ENCODE measurements at regions of chr21 and their contacts with region 1.

Region 1: DNA sequence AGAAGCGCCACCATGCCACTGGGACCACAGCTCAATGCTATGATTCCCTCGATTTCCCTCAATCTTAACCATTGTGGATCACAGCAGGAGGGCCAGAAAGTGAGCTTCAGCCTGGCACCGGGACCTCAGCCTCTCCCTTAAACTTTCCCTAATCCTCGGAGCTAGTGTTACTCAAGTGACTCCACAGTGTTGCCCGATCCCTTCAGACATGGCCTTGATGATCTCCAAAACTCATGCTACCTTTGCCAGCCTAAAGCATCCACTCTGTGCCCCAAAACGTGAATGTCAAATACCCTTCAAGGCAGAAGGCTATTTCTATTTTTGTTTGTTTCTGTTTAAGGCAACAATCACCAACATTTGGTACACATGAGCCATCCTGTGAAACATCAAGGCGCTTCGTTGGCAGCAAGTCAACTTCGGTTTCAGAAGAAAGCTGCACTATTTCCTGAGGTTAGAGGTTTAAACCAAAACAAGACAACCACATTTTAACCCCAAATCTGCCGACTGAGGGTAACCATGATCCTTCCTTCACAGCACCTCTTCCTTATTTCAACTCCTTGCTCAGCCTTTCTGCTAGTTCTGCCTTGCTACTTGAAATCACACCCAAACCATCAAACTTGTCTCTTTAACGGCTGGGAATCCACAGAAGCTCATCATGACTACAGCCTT is 94.4 kb upstream of the KRTAP19-8 start:
- DNase-seq: peak; percentile 84
- ATAC-seq: peak; percentile 75
- H3K4me3 Mint-ChIP-seq: peak overlapping the region; percentile 43
- H3K27ac Mint-ChIP-seq: peak overlapping the region; percentile 92
- H3K4me1 Mint-ChIP-seq: peaks cover 60% of the 10 kb centered on the region
- H3K27me3 Mint-ChIP-seq: no peaks in the 10 kb centered on the region

Region 2: GRCh38 chr21:30996728-30997127 is 136.0 kb before region 1 on chr21:
- CTCF ChIA-PET with region 1: no interaction called
- POLR2A ChIA-PET with region 1: no interaction called
- intact Hi-C with region 1: no loop called
- DNase-seq: no peak
- ATAC-seq: no peak
- H3K4me3 Mint-ChIP-seq: no peak overlapping the region
- H3K27ac Mint-ChIP-seq: no peak overlapping the region
- H3K4me1 Mint-ChIP-seq: no peaks in the 10 kb centered on the region
- H3K27me3 Mint-ChIP-seq: peaks cover 18% of the 10 kb centered on the region

Region 3: DNA sequence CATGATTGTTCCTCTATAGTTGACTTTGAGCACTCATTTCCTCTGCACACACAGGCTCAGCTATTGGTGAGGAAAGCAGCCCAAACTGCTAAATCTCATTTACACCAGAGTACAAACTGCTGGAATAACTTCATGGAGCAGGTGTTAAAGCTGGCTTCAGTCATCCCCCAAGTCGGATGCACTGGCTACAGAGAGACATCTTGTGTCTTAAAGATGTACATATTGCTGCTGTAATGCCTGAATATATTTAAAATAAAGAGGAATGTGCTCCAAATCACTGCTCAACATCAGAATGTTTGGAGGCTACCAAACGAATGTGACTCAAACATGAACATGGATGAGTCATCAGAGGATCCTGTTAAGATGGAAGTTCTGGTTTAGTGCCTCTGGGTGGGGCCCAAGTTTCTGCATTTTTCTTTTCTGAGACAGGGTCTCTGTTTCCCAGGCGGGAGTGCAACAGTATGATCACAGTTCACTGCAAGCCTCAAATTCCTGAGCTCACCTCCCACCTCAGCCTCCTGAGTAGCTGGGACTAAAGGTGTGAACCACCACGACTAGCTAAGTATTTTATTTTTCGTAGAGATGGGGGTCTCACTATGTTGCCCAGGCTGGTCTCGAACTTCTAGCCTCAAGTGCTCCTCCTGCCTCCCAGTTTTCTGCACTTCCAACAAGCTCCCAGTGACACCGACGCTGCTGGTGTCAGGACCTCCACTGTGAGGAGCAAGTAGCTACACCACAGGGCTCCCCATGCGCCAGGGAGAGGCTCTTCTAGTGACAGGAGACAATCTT is 15.4 kb before region 1 on chr21:
- CTCF ChIA-PET with region 1: interaction called, 10 read pairs
- POLR2A ChIA-PET with region 1: no interaction called
- intact Hi-C with region 1: no loop called
- DNase-seq: peak; percentile 32
- ATAC-seq: peak; percentile 83
- H3K4me3 Mint-ChIP-seq: no peak overlapping the region
- H3K27ac Mint-ChIP-seq: peak overlapping the region; percentile 30
- H3K4me1 Mint-ChIP-seq: peaks cover 15% of the 10 kb centered on the region
- H3K27me3 Mint-ChIP-seq: no peaks in the 10 kb centered on the region

Region 4: GRCh38 chr21:31161157-31161556 is 28.4 kb after region 1 on chr21:
- CTCF ChIA-PET with region 1: interaction called, 4 read pairs
- POLR2A ChIA-PET with region 1: interaction called, 3 read pairs
- intact Hi-C with region 1: loop called (anchors 1 to 2 kb)
- DNase-seq: peak; percentile 53
- ATAC-seq: peak; percentile 65
- H3K4me3 Mint-ChIP-seq: no peak overlapping the region
- H3K27ac Mint-ChIP-seq: peak overlapping the region; percentile 79
- H3K4me1 Mint-ChIP-seq: peaks cover 87% of the 10 kb centered on the region
- H3K27me3 Mint-ChIP-seq: no peaks in the 10 kb centered on the region

Region 5: DNA sequence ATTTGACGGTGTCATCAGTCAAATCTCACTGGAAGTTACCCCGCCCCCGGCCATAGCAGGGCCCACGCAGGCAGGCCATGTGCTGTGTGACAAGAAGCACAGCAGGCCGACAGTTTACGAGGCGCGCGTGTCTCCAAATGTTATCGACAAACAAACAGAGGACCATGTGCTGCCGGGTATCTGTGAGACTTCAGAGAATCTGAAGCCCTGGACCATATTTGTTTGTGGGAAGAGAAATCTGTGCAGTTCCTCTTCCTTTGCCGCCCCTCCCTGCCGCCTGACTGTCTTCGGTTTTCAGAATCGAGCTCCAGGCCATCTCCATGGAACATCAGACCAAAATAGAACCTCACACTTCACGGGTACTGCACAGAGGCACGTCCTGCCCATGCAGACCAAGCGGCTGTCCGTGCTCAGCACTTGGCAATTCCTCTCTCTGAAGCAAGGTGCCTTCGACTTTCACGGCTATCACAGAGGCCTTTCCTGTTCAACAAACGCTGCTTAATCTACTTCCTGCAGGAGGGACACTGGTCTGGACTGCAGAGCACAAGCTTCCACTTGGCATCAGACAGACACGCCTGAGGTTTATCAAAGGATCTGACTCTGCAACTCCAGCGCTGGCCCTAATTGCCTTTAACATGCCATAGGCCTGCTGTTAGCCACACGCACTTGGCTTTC is 41.3 kb after region 1 on chr21:
- CTCF ChIA-PET with region 1: interaction called, 3 read pairs
- POLR2A ChIA-PET with region 1: no interaction called
- intact Hi-C with region 1: loop called (anchors 1 to 2 kb)
- DNase-seq: peak; percentile 83
- ATAC-seq: peak; percentile 56
- H3K4me3 Mint-ChIP-seq: peak overlapping the region; percentile 59
- H3K27ac Mint-ChIP-seq: peak overlapping the region; percentile 89
- H3K4me1 Mint-ChIP-seq: peaks cover 89% of the 10 kb centered on the region
- H3K27me3 Mint-ChIP-seq: no peaks in the 10 kb centered on the region

Region 6: DNA sequence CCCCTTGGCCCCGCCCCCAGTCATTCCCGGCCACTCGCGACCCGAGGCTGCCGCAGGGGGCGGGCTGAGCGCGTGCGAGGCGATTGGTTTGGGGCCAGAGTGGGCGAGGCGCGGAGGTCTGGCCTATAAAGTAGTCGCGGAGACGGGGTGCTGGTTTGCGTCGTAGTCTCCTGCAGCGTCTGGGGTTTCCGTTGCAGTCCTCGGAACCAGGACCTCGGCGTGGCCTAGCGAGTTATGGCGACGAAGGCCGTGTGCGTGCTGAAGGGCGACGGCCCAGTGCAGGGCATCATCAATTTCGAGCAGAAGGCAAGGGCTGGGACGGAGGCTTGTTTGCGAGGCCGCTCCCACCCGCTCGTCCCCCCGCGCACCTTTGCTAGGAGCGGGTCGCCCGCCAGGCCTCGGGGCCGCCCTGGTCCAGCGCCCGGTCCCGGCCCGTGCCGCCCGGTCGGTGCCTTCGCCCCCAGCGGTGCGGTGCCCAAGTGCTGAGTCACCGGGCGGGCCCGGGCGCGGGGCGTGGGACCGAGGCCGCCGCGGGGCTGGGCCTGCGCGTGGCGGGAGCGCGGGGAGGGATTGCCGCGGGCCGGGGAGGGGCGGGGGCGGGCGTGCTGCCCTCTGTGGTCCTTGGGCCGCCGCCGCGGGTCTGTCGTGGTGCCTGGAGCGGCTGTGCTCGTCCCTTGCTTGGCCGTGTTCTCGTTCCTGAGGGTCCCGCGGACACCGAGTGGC is 527.0 kb after region 1 on chr21 and contains the start of gene SOD1:
- CTCF ChIA-PET with region 1: no interaction called
- POLR2A ChIA-PET with region 1: no interaction called
- intact Hi-C with region 1: loop called in 1 of 2 experiments (anchors 2 kb)
- DNase-seq: peak; percentile 97
- ATAC-seq: peak; percentile 93
- H3K4me3 Mint-ChIP-seq: peak within 1 kb of the TSS; percentile 88
- H3K27ac Mint-ChIP-seq: peak within 1 kb of the TSS; percentile 99
- H3K4me1 Mint-ChIP-seq: peaks cover 68% of the 10 kb centered on the region
- H3K27me3 Mint-ChIP-seq: no peaks in the 10 kb centered on the region
- total RNA-seq, gene SOD1: 232 to 284 TPM